IMR-90 (cell line): ENCODE measurements at regions of chr12 and their contacts with region 1.

Region 1: DNA sequence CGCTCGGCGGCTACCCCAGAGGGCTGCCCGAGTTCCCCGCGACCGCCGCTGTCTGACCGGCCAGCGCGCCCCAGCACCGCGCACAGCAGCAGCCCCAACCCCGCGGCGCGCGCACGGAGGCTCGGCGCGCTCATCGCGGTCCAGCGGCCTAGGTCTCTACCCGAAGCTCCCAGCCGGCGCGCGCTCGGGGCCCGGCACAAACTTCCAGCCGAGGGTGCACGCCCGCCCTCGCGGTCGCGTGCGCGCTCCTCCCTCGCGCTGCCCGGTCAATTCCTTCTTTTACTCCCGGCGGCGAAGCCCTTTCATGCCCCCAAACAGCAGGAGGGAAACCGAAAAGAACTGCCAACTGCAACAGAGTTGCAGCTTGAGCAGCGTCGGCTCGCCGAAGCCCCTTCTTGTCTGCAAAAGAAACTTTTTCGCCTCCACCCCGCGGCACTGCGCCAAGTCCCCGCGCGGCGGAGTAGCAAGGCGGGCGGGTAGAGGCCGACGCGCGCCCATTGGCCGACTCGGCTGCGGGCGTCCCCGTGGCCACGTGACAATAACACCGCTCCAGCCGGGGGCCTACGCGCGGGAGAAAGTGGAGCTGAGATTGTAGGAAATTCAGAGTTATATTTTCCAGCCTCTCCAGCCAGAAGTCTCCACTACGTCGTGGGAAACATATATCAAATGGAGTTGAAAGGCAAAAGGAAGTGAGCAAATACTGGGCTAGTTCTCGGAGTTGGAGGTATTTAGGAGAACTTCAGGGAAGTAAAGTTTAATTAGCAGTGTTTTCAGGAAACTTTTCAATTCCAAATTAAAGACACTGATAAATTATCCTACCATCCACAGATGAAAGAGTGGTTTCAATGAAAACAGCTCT is at the start of gene LRIG3:
- DNase-seq: peak; percentile 89
- ATAC-seq: peak; percentile 82
- H3K4me3 ChIP-seq: peak within 1 kb of the TSS; percentile 80
- H3K27ac ChIP-seq: peak within 1 kb of the TSS; percentile 98
- H3K4me1 ChIP-seq: no peaks in the 10 kb centered on the region; the same call in none of the 2 replicates
- H3K27me3 ChIP-seq: no peaks in the 10 kb centered on the region
- CTCF ChIP-seq: 0 out of 2 replicates have a peak, but pooled peaks have one; percentile 1
- POLR2A ChIP-seq: no peak
- RAD21 ChIP-seq: no peak
- total RNA-seq, gene LRIG3: 63.9 and 71.2 TPM in 2 replicates

Region 2: GRCh38 chr12:58425481-58426392 is 494.6 kb before region 1 on chr12:
- CTCF ChIA-PET with region 1: no interaction called
- POLR2A ChIA-PET with region 1: no interaction called
- dilution Hi-C with region 1: no loop called
- in situ Hi-C with region 1: no loop called
- intact Hi-C with region 1: loop called (anchors 5 kb)
- DNase-seq: peak; percentile 94
- ATAC-seq: peak; percentile 90
- H3K4me3 ChIP-seq: peak overlapping the region; percentile 8; the same call in 1 of the 2 replicates
- H3K27ac ChIP-seq: peak overlapping the region; percentile 79
- H3K4me1 ChIP-seq: peaks cover 12% of the 10 kb centered on the region
- H3K27me3 ChIP-seq: no peaks in the 10 kb centered on the region
- CTCF ChIP-seq: no peak
- POLR2A ChIP-seq: no peak
- RAD21 ChIP-seq: 0 out of 2 replicates have a peak, but pooled peaks have one; percentile 15

Region 3: DNA sequence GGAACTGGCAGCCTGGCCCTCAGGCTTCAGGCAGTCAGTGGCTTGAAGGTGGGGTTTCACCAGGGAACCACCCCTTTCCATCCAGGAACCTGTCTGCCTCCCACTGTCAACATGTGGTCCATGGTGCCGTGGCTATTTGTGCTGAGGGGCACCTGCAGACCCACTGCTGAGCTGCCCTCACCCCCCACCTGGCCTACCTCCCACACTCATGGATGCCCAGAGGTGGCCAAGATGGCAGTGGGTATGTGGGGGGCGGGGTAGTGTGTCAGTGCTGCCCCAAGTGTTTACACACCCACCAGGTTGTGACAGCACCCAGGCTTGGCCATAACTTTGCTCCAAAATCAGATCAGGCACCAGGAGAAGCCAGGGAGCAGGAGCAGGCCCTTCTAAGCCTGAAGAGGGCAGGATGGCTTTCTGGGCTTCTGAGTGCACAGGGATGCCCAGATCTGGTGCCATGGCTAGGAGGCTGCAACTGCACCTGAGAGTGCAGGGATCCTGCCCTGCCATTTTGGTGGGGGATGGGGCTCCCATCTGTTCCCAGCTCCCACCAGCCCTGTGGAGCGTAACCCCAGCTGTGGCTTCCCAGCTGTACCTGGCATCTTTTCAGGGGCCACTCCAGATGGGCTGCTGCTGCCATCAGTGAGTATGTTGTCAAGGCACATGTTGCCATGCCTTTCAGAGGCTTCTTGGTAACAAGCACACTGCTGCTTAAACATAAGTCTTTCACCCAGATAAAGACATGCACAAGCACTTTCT is 263.9 kb before region 1 on chr12:
- CTCF ChIA-PET with region 1: no interaction called
- POLR2A ChIA-PET with region 1: no interaction called
- dilution Hi-C with region 1: no loop called
- in situ Hi-C with region 1: no loop called
- intact Hi-C with region 1: no loop called
- DNase-seq: no peak
- ATAC-seq: no peak
- H3K4me3 ChIP-seq: no peak overlapping the region
- H3K27ac ChIP-seq: peak overlapping the region; percentile 20; the same call in 1 of the 2 replicates
- H3K4me1 ChIP-seq: peaks cover 6% of the 10 kb centered on the region
- H3K27me3 ChIP-seq: no peaks in the 10 kb centered on the region
- CTCF ChIP-seq: no peak
- POLR2A ChIP-seq: no peak
- RAD21 ChIP-seq: no peak

Region 4: GRCh38 chr12:58757422-58757821 is 162.9 kb before region 1 on chr12:
- CTCF ChIA-PET with region 1: no interaction called
- POLR2A ChIA-PET with region 1: no interaction called
- dilution Hi-C with region 1: no loop called
- in situ Hi-C with region 1: no loop called
- intact Hi-C with region 1: loop called (anchors 5 kb)
- DNase-seq: peak; percentile 98
- ATAC-seq: peak; percentile 91
- H3K4me3 ChIP-seq: no peak overlapping the region
- H3K27ac ChIP-seq: peak overlapping the region; percentile 38
- H3K4me1 ChIP-seq: peaks cover 5% of the 10 kb centered on the region; the same call in 1 of the 2 replicates
- H3K27me3 ChIP-seq: no peaks in the 10 kb centered on the region
- CTCF ChIP-seq: no peak
- POLR2A ChIP-seq: no peak
- RAD21 ChIP-seq: no peak

Region 5: GRCh38 chr12:58877242-58877743 is 43.0 kb before region 1 on chr12:
- CTCF ChIA-PET with region 1: interaction called, 3 read pairs
- POLR2A ChIA-PET with region 1: no interaction called
- dilution Hi-C with region 1: no loop called
- in situ Hi-C with region 1: no loop called
- intact Hi-C with region 1: loop called (anchors 5 kb)
- DNase-seq: peak; percentile 100
- ATAC-seq: peak; percentile 90
- H3K4me3 ChIP-seq: no peak overlapping the region
- H3K27ac ChIP-seq: peak overlapping the region; percentile 0; the same call in 1 of the 2 replicates
- H3K4me1 ChIP-seq: peaks cover 3% of the 10 kb centered on the region; the same call in 1 of the 2 replicates
- H3K27me3 ChIP-seq: no peaks in the 10 kb centered on the region
- CTCF ChIP-seq: no peak
- POLR2A ChIP-seq: no peak
- RAD21 ChIP-seq: no peak

Region 6: DNA sequence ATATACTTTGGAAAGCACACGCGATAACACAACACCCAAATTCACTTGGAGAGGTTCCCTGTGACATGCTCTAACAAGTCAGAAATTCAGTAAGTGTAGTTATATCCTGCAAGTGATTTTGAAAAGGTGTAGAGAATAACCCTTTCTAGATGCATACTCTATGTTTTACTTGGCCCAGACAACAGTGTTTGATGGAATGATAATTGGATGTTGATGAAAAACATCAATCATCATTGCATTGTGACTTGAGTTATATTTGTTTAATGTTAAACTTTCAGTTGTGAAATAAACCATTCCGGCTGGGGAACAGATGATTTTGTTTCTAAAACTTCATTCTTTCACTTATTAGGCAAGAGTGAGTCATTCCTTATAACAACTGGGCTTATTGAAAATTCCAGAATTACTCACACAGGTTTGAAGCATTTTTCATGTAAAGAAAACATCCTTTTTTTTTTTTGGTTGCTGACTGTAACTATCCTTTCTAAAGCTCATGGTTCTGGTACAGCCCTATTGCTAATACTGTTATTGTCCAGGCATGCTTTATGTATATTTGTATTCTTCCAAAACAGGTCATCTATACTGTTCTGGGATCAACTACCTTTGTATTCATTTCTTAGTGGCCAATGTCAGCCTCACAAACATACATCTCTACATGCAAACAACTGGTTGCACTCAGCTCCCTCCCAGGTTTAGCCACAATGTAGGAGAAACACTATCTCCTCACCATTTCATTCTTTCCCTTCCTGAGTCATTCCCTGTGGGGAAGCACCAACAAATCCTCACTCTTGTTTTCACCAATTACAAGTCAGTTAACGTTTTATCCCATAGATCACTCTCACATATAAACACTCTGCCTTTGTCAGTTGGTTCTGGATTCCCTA is 121.2 kb after region 1 on chr12:
- CTCF ChIA-PET with region 1: no interaction called
- POLR2A ChIA-PET with region 1: interaction called, 4 read pairs
- dilution Hi-C with region 1: no loop called
- in situ Hi-C with region 1: no loop called
- intact Hi-C with region 1: loop called (anchors 1 kb)
- DNase-seq: peak; percentile 96
- ATAC-seq: peak; percentile 74
- H3K4me3 ChIP-seq: peak overlapping the region; percentile 12; the same call in 1 of the 2 replicates
- H3K27ac ChIP-seq: peak overlapping the region; percentile 77
- H3K4me1 ChIP-seq: peaks cover 16% of the 10 kb centered on the region
- H3K27me3 ChIP-seq: no peaks in the 10 kb centered on the region
- CTCF ChIP-seq: no peak
- POLR2A ChIP-seq: no peak
- RAD21 ChIP-seq: no peak

Region 7: GRCh38 chr12:59087077-59087673 is 166.8 kb after region 1 on chr12:
- CTCF ChIA-PET with region 1: interaction called, 6 read pairs
- POLR2A ChIA-PET with region 1: no interaction called
- dilution Hi-C with region 1: no loop called
- in situ Hi-C with region 1: loop called (anchors 10 kb)
- intact Hi-C with region 1: loop called (anchors 1 kb)
- DNase-seq: peak; percentile 39
- ATAC-seq: peak; percentile 69
- H3K4me3 ChIP-seq: no peak overlapping the region
- H3K27ac ChIP-seq: no peak overlapping the region
- H3K4me1 ChIP-seq: peaks cover 13% of the 10 kb centered on the region
- H3K27me3 ChIP-seq: no peaks in the 10 kb centered on the region
- CTCF ChIP-seq: peak; percentile 81
- POLR2A ChIP-seq: no peak
- RAD21 ChIP-seq: peak; percentile 74

Region 8: GRCh38 chr12:59149997-59150642 is 229.8 kb after region 1 on chr12:
- CTCF ChIA-PET with region 1: no interaction called
- POLR2A ChIA-PET with region 1: no interaction called
- dilution Hi-C with region 1: no loop called
- in situ Hi-C with region 1: no loop called
- intact Hi-C with region 1: loop called (anchors 2 kb)
- DNase-seq: peak; percentile 84
- ATAC-seq: peak; percentile 96
- H3K4me3 ChIP-seq: no peak overlapping the region
- H3K27ac ChIP-seq: peak overlapping the region; percentile 2; the same call in 1 of the 2 replicates
- H3K4me1 ChIP-seq: peaks cover 4% of the 10 kb centered on the region; the same call in 1 of the 2 replicates
- H3K27me3 ChIP-seq: no peaks in the 10 kb centered on the region
- CTCF ChIP-seq: peak; percentile 100
- POLR2A ChIP-seq: no peak
- RAD21 ChIP-seq: peak; percentile 83